Activated CD4-positive, alpha-beta T cell treated with anti-CD3 and anti-CD28 coated beads for 36 hours (primary cell): ENCODE measurements at regions of chr5 and their contacts with region 1.

Region 1: GRCh38 chr5:64768358-64769312 is at the starts of genes CWC27 and SREK1IP1:
- DNase-seq: peak; percentile 89
- ATAC-seq: peak; percentile 97
- H3K4me3 Mint-ChIP-seq: peak within 1 kb of the TSS; percentile 91
- H3K27ac Mint-ChIP-seq: peak within 1 kb of the TSS; percentile 95
- H3K4me1 Mint-ChIP-seq: peaks cover 45% of the 10 kb centered on the region
- H3K27me3 Mint-ChIP-seq: no peaks in the 10 kb centered on the region
- total RNA-seq, gene CWC27: 35.4 to 35.8 TPM
- total RNA-seq, gene SREK1IP1: 27.8 TPM

Region 2: GRCh38 chr5:64634997-64635686 is 133.5 kb before region 1 on chr5:
- CTCF ChIA-PET with region 1: interaction called, 4 read pairs
- POLR2A ChIA-PET with region 1: no interaction called
- intact Hi-C with region 1: loop called in 1 of 2 experiments (anchors 5 kb)
- DNase-seq: no peak
- ATAC-seq: peak; percentile 23
- H3K4me3 Mint-ChIP-seq: no peak overlapping the region
- H3K27ac Mint-ChIP-seq: no peak overlapping the region
- H3K4me1 Mint-ChIP-seq: peaks cover 4% of the 10 kb centered on the region
- H3K27me3 Mint-ChIP-seq: peaks cover 28% of the 10 kb centered on the region